Activated CD8-positive, alpha-beta T cell treated with anti-CD3 and anti-CD28 coated beads, Interleukin-2, amount 10 ng/mL, durations not matched to agents 7 days and 5 days (primary cell): ENCODE measurements at regions of chr1 and their contacts with region 1.

Region 1: DNA sequence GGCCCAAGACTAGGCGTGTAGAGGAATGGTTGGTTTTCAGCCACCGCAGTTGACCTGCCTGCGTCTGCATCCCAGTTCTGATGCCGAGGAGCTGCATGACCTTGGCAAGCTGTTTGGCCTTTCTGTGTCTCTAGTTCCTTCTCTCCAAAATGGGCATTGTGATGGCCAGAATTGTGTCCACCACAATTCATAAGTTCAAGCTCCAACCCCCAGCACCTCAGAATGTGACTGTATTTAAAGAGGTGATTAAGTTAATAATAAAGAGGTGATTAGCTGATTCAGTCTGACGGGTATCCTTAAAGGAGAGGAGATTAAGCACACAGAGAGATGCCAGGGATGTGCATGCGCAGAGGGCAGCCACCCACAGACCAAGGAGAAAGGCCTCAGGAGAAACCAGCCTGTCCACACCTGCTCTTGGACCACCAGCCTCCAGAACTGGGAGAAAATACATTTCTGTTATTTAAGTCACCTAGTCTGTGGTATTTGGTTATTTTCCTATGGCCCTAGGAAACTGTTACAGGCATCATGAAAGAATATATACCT is 28.5 kb downstream of the MAB21L3 start:
- DNase-seq: peak; percentile 12
- ATAC-seq: no peak
- H3K4me3 Mint-ChIP-seq: no peak overlapping the region
- H3K27ac Mint-ChIP-seq: no peak overlapping the region
- H3K4me1 Mint-ChIP-seq: peaks cover 14% of the 10 kb centered on the region
- H3K27me3 Mint-ChIP-seq: peaks cover 7% of the 10 kb centered on the region

Region 2: DNA sequence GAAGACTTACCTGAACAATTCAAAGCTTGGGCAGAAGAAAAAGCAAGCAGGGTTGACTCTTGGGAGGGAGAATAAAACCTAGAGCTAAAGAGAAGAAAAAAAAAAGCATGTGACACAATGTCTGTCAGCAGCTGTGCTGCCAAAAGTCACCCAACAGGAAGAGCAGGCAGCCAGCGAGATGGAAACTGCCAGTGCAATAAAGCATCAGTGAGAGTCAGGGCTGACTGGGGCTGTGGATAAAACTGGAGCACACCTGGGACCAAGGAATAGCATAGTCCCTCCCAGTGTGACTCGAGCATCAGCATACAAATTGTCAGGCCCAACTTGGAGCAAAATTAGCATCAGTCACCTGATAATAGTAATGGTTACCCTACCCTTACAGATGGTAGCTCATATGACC is 228.3 kb before region 1 on chr1:
- CTCF ChIA-PET with region 1: no interaction called
- POLR2A ChIA-PET with region 1: no interaction called
- DNase-seq: no peak
- ATAC-seq: no peak
- H3K4me3 Mint-ChIP-seq: no peak overlapping the region
- H3K27ac Mint-ChIP-seq: no peak overlapping the region
- H3K4me1 Mint-ChIP-seq: no peaks in the 10 kb centered on the region
- H3K27me3 Mint-ChIP-seq: peaks cover 2% of the 10 kb centered on the region

Region 3: DNA sequence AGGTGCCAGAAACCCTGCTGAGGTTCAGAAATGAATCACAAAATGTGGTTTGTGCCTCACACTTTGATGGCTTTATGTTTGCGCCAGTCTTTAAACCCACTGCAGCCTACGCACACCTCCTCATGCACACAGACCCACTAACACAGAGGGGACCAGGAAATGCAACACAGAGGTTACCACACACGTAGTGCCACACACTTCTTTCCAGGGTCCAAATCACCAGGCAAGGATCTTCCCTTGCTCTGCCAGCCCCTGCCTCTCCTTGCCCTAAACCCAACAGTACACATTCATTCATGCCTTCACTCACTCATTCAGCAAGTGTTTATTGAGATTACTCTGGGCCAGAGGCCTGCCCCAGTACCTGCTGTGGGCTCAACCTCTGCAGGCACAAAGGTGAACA is 11.0 kb before region 1 on chr1:
- CTCF ChIA-PET with region 1: interaction called, 28 read pairs
- POLR2A ChIA-PET with region 1: no interaction called
- DNase-seq: peak; percentile 59
- ATAC-seq: peak; percentile 68
- H3K4me3 Mint-ChIP-seq: no peak overlapping the region
- H3K27ac Mint-ChIP-seq: peak overlapping the region; percentile 56
- H3K4me1 Mint-ChIP-seq: peaks cover 43% of the 10 kb centered on the region
- H3K27me3 Mint-ChIP-seq: peaks cover 10% of the 10 kb centered on the region

Region 4: GRCh38 chr1:116168277-116169097 is 28.8 kb after region 1 on chr1:
- CTCF ChIA-PET with region 1: interaction called, 30 read pairs
- POLR2A ChIA-PET with region 1: interaction called, 4 read pairs
- DNase-seq: peak; percentile 86
- ATAC-seq: peak; percentile 98
- H3K4me3 Mint-ChIP-seq: peak overlapping the region; percentile 71
- H3K27ac Mint-ChIP-seq: peak overlapping the region; percentile 85
- H3K4me1 Mint-ChIP-seq: peaks cover 16% of the 10 kb centered on the region
- H3K27me3 Mint-ChIP-seq: peaks cover 7% of the 10 kb centered on the region

Region 5: DNA sequence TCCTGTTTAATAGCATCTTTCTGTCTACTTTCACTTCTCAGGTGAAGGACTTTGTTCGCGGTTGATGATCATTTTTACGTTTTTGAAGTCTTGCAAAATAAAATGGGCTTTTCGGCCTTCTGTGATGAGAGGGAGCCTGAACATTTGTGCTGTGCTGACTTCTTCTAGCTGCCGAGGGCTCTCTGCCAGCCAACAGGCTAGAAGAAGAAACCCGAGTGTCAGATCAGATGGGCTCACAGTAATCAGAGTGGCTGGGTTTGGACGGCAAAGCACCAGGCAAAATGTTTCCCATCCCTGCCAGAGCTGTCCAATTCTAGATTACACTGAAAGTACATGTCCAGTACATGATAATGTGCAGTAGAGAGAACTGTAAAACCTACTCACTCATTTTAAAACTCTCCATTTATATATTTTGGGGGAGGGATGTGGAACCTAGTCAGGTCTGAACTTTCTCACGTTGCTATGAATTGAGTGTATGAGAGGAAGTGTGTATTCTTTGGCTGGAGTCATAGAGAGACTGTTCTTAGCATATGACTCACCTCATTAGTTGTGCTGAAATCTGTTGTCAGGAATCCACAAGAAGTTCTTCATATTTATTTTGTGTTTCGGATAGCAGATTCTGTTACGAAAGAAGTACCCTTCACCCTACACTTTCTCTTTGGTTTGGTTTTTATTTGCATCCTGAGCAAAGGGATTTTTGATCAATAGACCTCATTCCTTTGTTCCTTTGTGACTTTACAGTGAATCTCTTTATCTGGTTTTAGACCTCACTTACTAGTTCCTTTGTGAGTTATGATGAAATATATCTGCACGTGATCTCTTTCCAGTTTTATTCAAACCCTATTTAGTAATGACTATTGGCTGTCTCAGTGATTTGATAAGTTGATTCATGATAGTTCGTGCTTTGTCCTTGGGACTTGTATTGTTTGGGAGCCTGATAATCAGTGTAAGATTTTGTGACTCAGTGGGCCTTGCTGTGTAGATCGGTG is 238.2 kb after region 1 on chr1:
- CTCF ChIA-PET with region 1: interaction called, 19 read pairs
- POLR2A ChIA-PET with region 1: interaction called, 3 read pairs
- DNase-seq: peak; percentile 57
- ATAC-seq: peak; percentile 52
- H3K4me3 Mint-ChIP-seq: peak overlapping the region; percentile 92
- H3K27ac Mint-ChIP-seq: peak overlapping the region; percentile 94
- H3K4me1 Mint-ChIP-seq: peaks cover 74% of the 10 kb centered on the region
- H3K27me3 Mint-ChIP-seq: no peaks in the 10 kb centered on the region

Region 6: DNA sequence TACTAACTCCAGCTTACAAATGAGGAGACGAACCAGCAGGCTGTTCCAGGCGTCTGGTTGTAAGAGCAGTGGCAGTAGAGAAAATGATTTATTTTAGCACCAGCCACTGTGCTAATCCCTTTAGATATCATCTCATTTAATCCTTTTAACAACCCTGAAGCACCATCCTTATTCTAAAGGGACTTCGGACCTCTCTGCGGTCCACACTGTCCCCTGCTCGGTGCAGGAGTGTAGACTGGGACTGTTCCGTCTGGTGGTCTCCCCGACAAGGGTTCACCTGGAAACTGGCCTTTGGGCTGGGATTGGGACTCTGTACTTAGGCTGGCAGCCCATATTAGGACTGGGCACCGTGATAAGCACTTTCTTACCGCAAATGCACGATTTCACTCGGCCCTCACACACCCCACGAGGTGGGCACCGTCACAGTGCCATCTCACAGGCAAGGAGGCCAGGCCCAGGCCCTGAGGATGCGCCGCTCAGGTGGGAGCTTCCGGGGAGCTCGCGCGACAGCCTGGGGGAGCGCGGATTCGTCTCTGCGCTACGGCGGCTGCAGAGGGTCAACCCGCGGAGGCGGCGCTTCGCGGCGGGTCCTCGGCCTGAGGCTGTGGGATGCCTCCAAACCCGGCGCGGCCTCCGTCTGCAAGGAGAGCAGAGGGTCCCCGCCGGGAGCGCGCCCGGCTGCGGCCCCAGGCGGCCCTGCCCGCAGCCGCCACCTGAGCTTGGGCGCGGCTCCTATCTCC is 278.6 kb after region 1 on chr1:
- CTCF ChIA-PET with region 1: interaction called, 12 read pairs
- POLR2A ChIA-PET with region 1: no interaction called
- DNase-seq: peak; percentile 90
- ATAC-seq: peak; percentile 94
- H3K4me3 Mint-ChIP-seq: peak overlapping the region; percentile 90
- H3K27ac Mint-ChIP-seq: peak overlapping the region; percentile 92
- H3K4me1 Mint-ChIP-seq: peaks cover 68% of the 10 kb centered on the region
- H3K27me3 Mint-ChIP-seq: peaks cover 7% of the 10 kb centered on the region

Region 7: GRCh38 chr1:116485071-116485735 is 345.5 kb after region 1 on chr1:
- CTCF ChIA-PET with region 1: interaction called, 429 read pairs
- POLR2A ChIA-PET with region 1: interaction called, 10 read pairs
- DNase-seq: peak; percentile 91
- ATAC-seq: peak; percentile 96
- H3K4me3 Mint-ChIP-seq: no peak overlapping the region
- H3K27ac Mint-ChIP-seq: no peak overlapping the region
- H3K4me1 Mint-ChIP-seq: peaks cover 4% of the 10 kb centered on the region
- H3K27me3 Mint-ChIP-seq: peaks cover 7% of the 10 kb centered on the region

Region 8: DNA sequence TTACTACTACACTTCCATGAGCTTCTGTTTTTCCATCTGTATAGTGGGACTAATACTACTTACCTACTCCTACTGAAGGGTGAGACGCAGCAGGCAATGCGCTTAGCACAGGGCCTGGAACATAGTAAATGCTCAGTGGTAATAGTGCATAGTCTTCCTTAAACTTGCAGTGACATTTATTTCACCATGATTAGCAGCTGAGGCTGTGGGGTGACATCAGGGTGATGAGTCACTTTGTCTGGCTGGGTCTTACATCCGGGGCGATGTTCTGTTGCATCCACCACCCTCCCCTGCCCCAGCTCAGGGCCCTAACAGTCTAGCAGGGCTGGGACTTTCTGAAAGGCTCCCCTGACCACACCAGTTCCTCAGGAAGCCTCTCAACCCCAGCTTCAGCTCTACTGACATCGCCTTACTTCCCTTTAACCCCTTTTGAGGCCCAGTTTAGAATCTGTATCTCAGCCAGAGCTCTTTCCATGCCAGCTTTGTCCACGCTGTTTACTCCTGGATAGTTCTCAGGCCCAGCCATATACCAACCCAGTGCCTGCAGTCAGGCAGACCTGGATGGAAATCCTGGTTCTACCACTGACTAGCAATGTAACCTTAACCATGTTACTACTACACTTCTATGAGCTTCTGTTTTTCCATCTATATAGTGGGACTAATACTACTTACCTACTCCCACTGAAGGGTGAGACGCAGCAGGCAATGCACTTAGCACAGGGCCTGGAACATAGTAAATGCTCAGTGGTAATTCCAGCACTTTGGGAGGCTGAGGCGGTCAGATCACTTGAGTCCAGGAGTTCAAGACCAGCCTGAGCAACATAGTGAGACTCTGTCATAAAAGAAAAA is 364.9 kb after region 1 on chr1:
- CTCF ChIA-PET with region 1: interaction called, 180 read pairs
- POLR2A ChIA-PET with region 1: no interaction called
- DNase-seq: peak; percentile 94
- ATAC-seq: peak; percentile 95
- H3K4me3 Mint-ChIP-seq: peak overlapping the region; percentile 45
- H3K27ac Mint-ChIP-seq: peak overlapping the region; percentile 90
- H3K4me1 Mint-ChIP-seq: peaks cover 82% of the 10 kb centered on the region
- H3K27me3 Mint-ChIP-seq: no peaks in the 10 kb centered on the region